Dendritic cell treated with granulocyte-macrophage colony-stimulating factor and Interleukin-4, amounts not matched to agents 40 ng/mL and 50 ng/mL, for 4 days (primary cell): ENCODE measurements at regions of chr19 and their contacts with region 1.

Region 1: DNA sequence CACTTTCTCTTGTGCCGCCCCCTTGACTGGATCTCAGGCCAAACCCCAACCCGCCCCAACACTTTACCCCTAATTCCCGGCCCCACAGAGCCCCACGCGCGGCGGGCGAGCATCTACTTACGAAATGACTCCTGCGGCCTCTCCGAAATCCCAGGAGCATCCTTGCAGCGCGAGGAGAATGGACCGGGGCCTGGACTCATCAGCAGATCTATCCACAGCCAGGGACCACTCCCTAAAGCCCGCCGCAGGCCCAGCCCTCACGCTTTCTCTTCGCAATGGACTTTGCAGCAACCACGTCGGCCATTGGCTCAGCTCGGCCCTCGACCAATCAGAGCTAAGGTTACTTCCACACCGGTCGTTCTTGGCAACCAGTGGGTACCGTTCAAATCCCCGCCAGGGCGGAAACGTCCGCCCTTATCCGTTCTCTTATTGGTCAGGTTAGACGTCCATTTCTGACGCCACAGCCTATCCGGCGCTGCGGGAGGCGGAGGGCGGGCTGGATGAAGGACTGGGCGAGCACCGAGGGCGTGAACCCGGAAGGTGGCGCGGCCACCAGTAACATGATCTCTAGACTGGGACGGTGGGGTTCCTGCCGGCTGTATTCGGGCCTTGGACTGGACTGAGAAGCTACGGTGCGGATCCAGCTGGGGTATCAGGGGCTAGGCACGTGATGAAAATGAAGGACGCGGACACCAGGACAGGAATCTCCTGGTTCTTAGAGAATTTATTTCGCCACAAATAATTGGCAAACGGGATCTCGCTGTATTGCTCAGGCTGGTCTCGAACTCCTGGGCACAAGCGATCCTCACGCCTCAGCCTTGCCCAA is at the starts of genes CEP89 and FAAP24:
- H3K4me3 Mint-ChIP-seq: peak within 1 kb of the TSS; percentile 99
- H3K27ac Mint-ChIP-seq: peak within 1 kb of the TSS; percentile 97
- H3K4me1 Mint-ChIP-seq: peaks cover 19% of the 10 kb centered on the region
- H3K27me3 Mint-ChIP-seq: no peaks in the 10 kb centered on the region

Region 2: GRCh38 chr19:32691291-32691951 is 280.5 kb before region 1 on chr19 and contains the start of gene NUDT19:
- intact Hi-C with region 1: loop called (anchors 10 kb)
- H3K4me3 Mint-ChIP-seq: peak within 1 kb of the TSS; percentile 86
- H3K27ac Mint-ChIP-seq: peak within 1 kb of the TSS; percentile 94
- H3K4me1 Mint-ChIP-seq: peaks cover 58% of the 10 kb centered on the region
- H3K27me3 Mint-ChIP-seq: no peaks in the 10 kb centered on the region

Region 3: DNA sequence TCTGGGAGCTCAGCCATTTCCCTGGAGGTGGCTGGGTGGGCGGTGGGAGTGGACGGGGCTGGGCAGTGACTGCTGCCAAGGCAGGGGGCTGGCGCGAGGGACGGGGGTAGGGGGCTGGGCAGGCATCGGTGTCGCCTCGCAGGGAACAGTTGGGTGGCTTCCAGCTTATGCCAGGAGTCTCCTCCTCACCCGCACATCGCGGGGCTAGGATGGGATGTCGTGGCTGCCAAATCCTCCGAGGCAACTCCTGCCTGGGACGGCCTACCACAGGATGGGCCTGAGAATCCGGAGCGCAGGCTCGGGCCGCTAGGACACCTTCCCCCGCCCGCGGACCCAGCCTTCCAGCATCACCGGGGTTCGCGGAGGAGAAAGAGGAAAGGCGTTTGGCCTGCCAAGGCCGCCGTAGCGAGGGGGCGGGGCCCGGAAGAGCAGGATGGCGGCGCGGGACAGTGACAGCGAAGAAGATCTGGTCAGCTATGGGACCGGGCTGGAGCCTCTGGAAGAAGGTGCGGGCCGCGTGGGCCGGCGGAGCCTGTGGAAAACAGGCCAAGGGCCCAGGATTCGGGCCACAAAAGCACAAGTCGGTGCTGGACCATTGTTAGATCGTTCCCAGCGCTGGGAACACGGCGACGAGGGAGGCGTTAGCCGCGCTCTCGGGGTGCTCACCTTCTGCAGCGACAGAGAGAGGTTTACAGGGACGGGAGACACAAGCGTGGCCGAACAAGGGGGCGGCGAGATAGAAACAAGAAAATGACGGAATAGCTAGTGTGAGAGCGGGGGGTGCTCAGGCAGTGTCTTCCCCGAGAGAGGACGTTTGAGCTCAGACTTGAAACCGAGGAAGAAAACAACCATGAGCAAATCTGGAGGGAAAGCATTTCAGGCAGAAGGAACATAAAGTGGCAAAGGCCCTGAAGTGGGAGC is 109.1 kb after region 1 on chr19 and contains the start of gene GPATCH1:
- intact Hi-C with region 1: loop called (anchors 2 kb)
- H3K4me3 Mint-ChIP-seq: peak within 1 kb of the TSS; percentile 88
- H3K27ac Mint-ChIP-seq: peak within 1 kb of the TSS; percentile 90
- H3K4me1 Mint-ChIP-seq: peaks cover 24% of the 10 kb centered on the region
- H3K27me3 Mint-ChIP-seq: no peaks in the 10 kb centered on the region

Region 4: GRCh38 chr19:33110137-33110910 is 138.4 kb after region 1 on chr19:
- intact Hi-C with region 1: loop called (anchors 10 kb)
- H3K4me3 Mint-ChIP-seq: no peak overlapping the region
- H3K27ac Mint-ChIP-seq: no peak overlapping the region
- H3K4me1 Mint-ChIP-seq: no peaks in the 10 kb centered on the region
- H3K27me3 Mint-ChIP-seq: no peaks in the 10 kb centered on the region

Region 5: GRCh38 chr19:33176670-33177416 is 204.9 kb after region 1 on chr19:
- intact Hi-C with region 1: loop called (anchors 5 kb)
- H3K4me3 Mint-ChIP-seq: peak overlapping the region; percentile 93
- H3K27ac Mint-ChIP-seq: peak overlapping the region; percentile 92
- H3K4me1 Mint-ChIP-seq: peaks cover 54% of the 10 kb centered on the region
- H3K27me3 Mint-ChIP-seq: no peaks in the 10 kb centered on the region

Region 6: DNA sequence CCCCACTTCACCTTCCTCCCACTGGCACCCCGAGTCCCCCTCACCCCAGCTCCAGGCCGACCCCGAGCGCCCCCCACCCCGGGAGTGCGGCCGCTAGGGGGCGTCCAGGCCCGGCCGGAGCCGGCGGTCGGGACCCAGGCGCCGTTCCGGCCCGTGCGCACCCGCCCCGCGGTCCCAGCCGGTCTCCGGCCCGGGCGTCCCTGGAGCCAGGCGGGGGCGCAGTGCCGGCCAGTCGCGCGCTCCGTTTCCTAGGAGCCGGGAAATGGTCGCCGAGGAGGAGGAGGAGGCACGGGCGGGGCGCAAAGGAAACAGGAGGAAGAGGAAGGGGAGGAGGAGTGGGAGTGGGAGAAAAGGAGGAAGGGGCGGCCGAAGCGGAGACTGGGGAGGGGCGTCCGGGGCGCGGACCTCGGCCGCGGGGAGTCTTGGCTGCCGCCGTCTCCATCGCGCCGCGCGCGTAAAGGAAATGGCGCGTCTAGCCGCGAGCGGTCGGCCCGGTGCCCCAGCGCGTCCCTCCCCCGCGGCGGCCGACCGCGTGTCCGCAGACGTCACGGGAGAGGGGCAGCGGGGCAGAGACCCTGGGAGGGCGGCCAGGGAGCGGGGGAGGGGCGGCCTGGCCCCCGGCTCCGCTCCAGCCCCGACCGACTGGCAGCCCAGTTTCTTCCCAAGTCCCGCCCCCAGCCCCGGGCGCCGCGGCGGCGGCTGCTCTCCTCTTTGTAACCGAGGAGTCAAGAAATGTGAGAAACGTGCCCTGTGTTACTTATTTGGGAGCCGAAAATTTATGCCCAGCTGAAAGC is 823.6 kb after region 1 on chr19:
- intact Hi-C with region 1: loop called (anchors 10 kb)
- H3K4me3 Mint-ChIP-seq: peak overlapping the region; percentile 90
- H3K27ac Mint-ChIP-seq: peak overlapping the region; percentile 89
- H3K4me1 Mint-ChIP-seq: peaks cover 11% of the 10 kb centered on the region
- H3K27me3 Mint-ChIP-seq: peaks cover 10% of the 10 kb centered on the region